Left cardiac atrium (tissue), 4 donors: ENCODE measurements at regions of chr9 and their contacts with region 1.

Region 1: GRCh38 chr9:37984672-37985611 is 81.0 kb upstream of the SLC25A51 start:
- DNase-seq: peak; percentile 75
- ATAC-seq: peak; percentile 75 to 89

Region 2: GRCh38 chr9:37943329-37944265 is 41.3 kb before region 1 on chr9:
- intact Hi-C with region 1: loop called in 1 of 2 experiments (anchors 5 kb)
- DNase-seq: peak; percentile 55
- ATAC-seq: peak; percentile 34 to 56

Region 3: DNA sequence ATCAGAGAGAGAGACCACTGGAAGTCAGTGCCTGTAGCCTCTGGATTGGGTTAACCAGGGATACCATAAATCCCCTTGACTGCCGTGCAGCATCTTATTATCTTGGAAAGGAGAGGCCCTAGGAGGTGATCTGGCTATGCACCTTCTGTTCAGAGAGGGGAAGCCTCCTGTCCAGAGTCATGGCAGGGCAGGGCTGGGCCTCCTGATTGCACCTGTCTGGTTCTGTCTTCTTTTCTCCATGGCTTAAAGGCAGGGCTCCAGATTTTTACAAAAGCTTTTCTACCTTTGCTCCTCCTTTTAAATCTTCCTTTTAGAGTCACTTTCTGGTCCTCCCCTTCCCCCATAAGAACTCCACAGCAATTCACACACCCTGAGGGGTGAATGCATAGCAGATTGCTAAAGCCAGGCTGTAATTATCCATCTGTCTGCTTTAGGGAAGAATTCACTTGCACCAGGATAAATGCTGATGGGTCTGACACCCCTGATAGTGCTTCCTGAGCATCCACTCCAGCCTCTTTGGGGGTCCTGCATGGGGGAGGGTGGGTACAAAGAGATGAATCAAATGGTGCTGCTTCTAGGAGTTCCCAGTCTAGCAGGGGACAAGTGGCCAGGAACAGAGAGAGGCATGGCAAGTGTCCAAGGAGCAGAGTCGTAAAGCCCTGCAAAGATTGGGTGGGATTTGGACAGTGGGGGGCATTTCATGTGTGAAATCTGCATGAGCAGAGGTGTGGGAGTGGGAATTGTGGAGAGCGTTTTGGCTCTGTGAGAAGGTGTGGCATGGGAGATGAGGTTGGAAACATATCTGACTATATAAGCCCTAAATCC is 266.3 kb after region 1 on chr9:
- intact Hi-C with region 1: no loop called
- DNase-seq: no peak
- ATAC-seq: no peak